Head of caudate nucleus (tissue), 42 donors: ENCODE measurements at regions of chr19 and their contacts with region 1.

Region 1: GRCh38 chr19:44796701-44797115 is 12.2 kb upstream of the BCAM start:
- DNase-seq: peak in 2 of 42 donors; percentile 15 to 17

Region 2: DNA sequence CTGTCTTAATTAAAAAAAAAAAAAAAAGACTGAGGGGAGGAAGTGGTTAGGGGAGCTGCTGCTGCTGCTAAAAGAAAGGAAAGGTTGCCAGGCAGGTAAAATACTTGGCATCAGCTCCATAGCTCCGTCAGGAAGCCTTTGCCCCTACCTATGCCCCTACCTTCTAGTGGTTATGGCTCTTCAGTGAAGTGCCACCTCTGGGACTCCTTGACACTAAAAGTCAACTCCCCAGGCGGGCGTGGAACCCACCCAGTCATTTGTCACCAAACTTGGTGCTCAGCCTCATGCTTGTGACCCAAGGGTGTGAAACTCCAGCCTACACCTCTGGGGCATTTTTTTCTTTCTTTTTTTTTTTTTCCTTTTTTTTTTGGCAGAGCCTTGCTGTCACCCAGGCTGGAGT is 44.5 kb after region 1 on chr19:
- intact Hi-C with region 1: loop called (anchors 5 kb)
- DNase-seq: no peak